Colonic mucosa (tissue), 4 donors: ENCODE measurements at regions of chr22 and their contacts with region 1.

Region 1: DNA sequence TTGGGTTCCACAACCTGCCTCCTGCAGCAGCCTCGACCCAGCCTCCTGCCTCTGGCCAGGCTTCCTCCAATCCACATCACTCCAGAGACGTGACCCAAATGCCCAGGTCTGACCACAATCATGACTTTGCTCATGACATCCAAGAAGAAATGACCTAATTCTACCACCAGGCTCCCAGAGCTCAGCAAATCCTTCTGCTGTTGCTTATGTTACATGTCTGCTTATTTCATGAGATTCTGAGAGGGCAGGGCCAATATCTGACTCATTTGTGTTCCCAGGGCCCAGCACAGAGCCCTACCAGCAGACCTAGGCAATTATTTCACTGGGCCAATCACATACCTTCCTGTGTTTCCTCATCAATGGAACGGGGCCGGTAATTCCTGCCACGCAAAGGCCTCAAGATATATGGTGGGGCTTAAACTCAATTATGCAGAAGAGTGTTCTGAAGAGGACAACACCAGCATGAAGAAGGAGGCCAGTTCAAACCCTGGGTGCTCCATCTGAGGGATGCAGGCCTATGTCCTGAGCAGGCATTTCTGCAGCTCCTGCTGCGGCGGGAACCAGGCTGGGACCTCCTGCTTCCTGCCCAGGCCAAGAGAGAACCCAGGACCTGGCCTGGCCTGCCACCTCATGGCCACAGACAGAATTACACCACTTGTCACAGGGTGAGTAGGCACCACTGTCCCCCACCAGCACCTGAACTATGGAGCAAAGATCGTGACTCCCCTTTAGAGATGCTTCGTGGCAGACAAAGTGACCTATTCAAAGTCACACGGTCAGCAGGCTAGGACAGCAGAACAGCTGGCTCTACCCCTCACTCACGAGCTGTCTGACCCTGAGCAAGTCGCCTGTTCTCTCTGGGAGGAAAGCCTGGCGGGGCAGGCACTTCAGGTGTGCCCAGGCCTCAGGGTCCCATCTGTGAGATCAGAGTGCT is 5.9 kb downstream of the CENPM start:
- DNase-seq: peak; percentile 89
- H3K4me3 ChIP-seq: no peak overlapping the region
- H3K27ac ChIP-seq: peak overlapping the region; percentile 91
- H3K4me1 ChIP-seq: peaks cover 8% of the 10 kb centered on the region
- H3K27me3 ChIP-seq: no peaks in the 10 kb centered on the region
- CTCF ChIP-seq: peak; percentile 92

Region 2: DNA sequence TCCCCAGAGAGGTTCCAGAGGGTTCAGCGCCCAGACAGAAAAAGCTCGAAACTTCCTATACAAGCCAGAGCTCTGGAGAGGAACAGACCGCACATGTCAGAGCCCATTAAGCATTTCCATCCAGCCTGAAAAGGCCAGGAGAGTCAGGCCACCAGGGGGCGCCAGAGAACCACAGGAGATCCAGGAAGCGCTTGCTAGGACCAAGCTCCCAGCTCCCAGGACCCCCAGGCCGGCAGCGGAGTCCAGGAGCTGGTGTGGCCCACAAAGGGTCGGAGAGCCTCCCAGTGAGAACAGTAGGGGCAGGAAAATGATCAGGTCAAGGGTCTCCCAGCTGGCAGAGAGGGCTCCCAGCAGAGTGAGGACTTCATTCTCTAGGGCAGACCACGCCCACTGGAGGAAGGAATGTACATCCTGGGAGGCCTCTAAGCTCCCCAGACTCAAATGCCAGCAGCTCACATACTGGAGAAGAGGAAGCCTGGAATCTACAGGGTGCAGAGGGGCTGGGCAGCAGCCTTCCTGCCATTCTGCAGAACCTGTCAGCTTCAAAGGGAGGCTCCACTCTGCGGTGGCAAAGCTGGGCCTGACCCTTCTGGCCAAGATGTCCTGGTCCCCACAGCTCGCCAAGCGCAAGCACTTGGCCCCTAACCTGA is 243.8 kb before region 1 on chr22:
- intact Hi-C with region 1: loop called (anchors 5 kb)
- DNase-seq: peak; percentile 97
- H3K4me3 ChIP-seq: peak overlapping the region; percentile 26
- H3K27ac ChIP-seq: no peak overlapping the region
- H3K4me1 ChIP-seq: peaks cover 7% of the 10 kb centered on the region
- H3K27me3 ChIP-seq: no peaks in the 10 kb centered on the region
- CTCF ChIP-seq: peak; percentile 99

Region 3: GRCh38 chr22:41746567-41747400 is 194.3 kb before region 1 on chr22:
- intact Hi-C with region 1: loop called (anchors 5 kb)
- DNase-seq: peak; percentile 79
- H3K4me3 ChIP-seq: no peak overlapping the region
- H3K27ac ChIP-seq: no peak overlapping the region
- H3K4me1 ChIP-seq: no peaks in the 10 kb centered on the region
- H3K27me3 ChIP-seq: no peaks in the 10 kb centered on the region
- CTCF ChIP-seq: peak; percentile 67

Region 4: DNA sequence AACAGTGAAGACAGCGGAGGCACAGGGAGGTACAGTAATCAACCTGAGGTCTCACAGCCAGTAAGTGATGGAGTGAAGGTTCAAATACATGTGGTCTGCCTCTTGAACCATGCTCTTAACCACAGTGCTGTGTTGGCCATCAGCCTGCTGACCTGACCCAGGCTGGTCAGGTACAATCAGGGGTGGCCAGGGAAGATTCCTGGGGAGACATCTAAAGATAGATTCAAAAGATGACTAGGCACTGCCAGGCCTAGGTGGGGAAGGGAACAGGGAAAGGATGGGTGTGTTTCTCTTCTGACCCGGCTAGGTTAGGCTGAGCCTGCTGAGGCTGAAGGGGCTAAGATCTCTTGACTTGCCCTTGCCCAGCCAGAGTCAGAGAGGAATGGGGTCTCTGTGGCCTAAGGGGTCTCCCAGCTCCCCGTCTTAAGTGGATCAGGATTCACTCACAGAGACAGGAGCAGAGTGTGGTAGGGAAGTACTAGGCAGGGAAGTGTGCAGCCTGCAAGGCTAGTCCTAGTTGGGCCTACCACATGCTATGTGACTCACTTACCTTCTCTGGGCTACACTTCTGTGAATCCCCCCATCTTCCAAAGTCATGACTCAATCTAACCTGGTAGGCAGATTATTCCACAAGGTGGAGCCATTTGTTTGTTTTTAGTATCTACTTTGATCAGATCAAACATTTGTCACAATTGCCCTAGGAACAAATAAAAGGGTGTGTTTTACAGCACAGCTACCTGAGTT is 118.6 kb before region 1 on chr22:
- intact Hi-C with region 1: loop called (anchors 2 kb)
- DNase-seq: no peak
- H3K4me3 ChIP-seq: no peak overlapping the region
- H3K27ac ChIP-seq: no peak overlapping the region
- H3K4me1 ChIP-seq: peaks cover 7% of the 10 kb centered on the region
- H3K27me3 ChIP-seq: no peaks in the 10 kb centered on the region
- CTCF ChIP-seq: peak; percentile 67